ENCODE measurements at regions of chr7 and their contacts with region 1.

Region 1: DNA sequence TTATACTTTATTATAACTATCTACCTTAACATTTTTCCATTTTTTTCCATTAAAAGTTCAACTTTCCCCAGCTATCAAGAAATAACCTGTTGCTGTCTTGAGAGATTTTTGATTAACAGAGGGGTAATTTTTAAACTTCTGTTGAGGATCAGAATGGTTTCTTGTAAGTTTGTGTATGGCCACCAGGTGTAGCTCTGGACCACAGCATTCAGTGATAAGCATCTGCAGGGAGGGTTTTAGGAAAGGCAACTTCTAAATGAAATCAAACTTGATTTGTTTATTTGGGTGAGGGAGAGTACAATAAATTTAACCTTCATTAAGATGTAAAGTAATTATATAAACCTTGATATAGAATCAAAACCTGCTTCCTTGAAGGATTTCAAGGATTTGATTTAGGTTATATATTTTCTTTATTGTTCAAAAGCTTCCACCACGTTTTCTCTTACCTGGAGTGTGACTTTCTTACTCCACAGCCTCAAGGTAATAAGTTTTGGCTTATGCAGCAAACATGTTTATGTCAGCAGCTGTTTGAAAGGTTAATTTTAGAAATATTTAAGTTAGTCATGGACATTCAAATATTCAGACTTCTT is 153.3 kb downstream of the STK31 start:
- DNase-seq: peak; percentile 46
- ATAC-seq: peak; percentile 45
- H3K4me3 Mint-ChIP-seq: no peak overlapping the region
- H3K27ac Mint-ChIP-seq: no peak overlapping the region
- H3K4me1 Mint-ChIP-seq: no peaks in the 10 kb centered on the region
- H3K27me3 Mint-ChIP-seq: peaks cover 4% of the 10 kb centered on the region
- CTCF ChIP-seq: peak; percentile 76

Region 2: GRCh38 chr7:23759671-23760391 is 103.5 kb before region 1 on chr7:
- CTCF ChIA-PET with region 1: no interaction called
- POLR2A ChIA-PET with region 1: no interaction called
- intact Hi-C with region 1: no loop called
- DNase-seq: no peak
- ATAC-seq: no peak
- H3K4me3 Mint-ChIP-seq: no peak overlapping the region
- H3K27ac Mint-ChIP-seq: no peak overlapping the region
- H3K4me1 Mint-ChIP-seq: peaks cover 2% of the 10 kb centered on the region
- H3K27me3 Mint-ChIP-seq: no peaks in the 10 kb centered on the region
- CTCF ChIP-seq: no peak

Region 3: GRCh38 chr7:24152356-24152755 is 289.1 kb after region 1 on chr7:
- CTCF ChIA-PET with region 1: no interaction called
- POLR2A ChIA-PET with region 1: no interaction called
- intact Hi-C with region 1: loop called (anchors 10 kb)
- DNase-seq: no peak
- ATAC-seq: no peak
- H3K4me3 Mint-ChIP-seq: no peak overlapping the region
- H3K27ac Mint-ChIP-seq: no peak overlapping the region
- H3K4me1 Mint-ChIP-seq: no peaks in the 10 kb centered on the region
- H3K27me3 Mint-ChIP-seq: peaks cover 3% of the 10 kb centered on the region
- CTCF ChIP-seq: no peak

Measured in activated CD8-positive, alpha-beta T cell treated with anti-CD3 and anti-CD28 coated beads for 36 hours (primary cell).